HEK293 (cell line): ENCODE measurements at regions of chr12 and their contacts with region 1.

Region 1: DNA sequence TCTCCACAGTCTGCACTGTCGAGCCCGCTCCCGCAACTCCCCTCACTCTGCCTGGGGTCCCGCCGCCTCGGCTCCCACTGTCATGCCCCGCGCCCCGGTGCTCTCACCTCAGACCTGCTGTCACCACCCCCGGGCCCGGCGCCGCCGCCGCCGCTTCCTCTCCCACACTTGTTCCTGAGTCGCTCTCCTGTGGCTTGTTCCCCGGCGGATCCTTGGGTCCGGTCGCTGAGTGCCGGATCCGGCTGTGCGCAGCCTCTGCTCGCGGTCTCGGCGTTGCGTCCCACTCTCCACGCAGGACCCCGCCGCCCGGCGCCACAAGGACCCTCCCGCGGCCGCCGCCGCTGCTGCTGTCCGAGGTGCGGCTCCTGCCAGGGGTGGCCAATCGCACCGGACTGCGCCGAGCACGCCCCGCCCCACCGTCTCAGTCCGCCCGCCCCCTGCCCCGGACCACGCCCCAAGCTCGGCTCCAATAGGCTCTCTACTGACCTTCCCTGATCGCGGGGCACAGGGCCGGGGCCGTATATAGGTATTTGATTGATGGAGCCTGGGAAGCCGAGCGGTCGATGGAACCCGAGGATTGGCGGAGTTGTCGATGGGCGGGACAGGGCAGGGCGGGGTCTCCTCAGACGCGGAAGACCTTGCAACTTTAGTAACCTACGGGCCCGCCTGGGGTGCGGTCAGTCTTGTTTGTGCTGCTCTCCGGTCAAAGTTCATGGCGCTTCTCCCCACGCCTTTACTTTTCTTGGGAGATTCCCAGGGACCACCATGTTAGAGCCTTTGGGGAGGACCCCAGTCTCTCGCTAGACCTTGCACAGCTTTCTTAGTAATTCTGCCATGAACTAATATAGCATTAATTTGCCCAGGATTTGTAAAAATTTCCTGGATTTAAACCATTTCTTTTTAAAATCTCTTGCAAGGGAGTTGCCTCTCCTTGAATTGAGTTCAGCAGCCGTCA is at the start of gene TAOK3:
- H3K4me3 ChIP-seq: peak within 1 kb of the TSS; percentile 87
- H3K27ac ChIP-seq: no peak within 1 kb of the TSS; the same call in 1 of the 2 replicates
- H3K4me1 ChIP-seq: no peaks in the 10 kb centered on the region
- CTCF ChIP-seq: peak; percentile 39; the same call in 1 of the 2 replicates

Region 2: GRCh38 chr12:117874842-117875434 is 497.9 kb before region 1 on chr12:
- CTCF ChIA-PET with region 1: interaction called, 11 read pairs
- POLR2A ChIA-PET with region 1: no interaction called
- H3K4me3 ChIP-seq: no peak overlapping the region
- H3K27ac ChIP-seq: no peak overlapping the region
- H3K4me1 ChIP-seq: no peaks in the 10 kb centered on the region; the same call in 1 of the 2 replicates
- CTCF ChIP-seq: peak; percentile 73

Region 3: DNA sequence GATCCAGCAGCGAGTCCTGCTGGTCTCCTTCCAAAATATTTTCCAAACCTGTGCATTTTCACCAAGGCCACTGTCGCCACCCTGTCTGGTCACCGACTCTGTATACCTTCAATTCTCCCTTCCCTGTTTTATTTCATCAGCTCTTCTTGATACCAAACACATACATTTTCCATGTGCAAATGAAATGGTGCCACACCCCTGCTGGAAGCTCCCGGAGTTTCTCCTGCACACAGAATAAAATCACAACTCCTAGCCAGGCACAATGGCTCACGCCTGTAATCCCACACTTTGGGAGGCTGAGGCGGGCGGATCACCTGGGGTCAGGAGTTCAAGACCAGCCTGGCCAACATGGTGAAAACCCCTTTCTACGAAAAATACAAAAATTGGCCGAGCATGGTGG is 283.0 kb before region 1 on chr12:
- CTCF ChIA-PET with region 1: no interaction called
- POLR2A ChIA-PET with region 1: no interaction called
- H3K4me3 ChIP-seq: no peak overlapping the region
- H3K27ac ChIP-seq: no peak overlapping the region
- H3K4me1 ChIP-seq: no peaks in the 10 kb centered on the region
- CTCF ChIP-seq: no peak

Region 4: DNA sequence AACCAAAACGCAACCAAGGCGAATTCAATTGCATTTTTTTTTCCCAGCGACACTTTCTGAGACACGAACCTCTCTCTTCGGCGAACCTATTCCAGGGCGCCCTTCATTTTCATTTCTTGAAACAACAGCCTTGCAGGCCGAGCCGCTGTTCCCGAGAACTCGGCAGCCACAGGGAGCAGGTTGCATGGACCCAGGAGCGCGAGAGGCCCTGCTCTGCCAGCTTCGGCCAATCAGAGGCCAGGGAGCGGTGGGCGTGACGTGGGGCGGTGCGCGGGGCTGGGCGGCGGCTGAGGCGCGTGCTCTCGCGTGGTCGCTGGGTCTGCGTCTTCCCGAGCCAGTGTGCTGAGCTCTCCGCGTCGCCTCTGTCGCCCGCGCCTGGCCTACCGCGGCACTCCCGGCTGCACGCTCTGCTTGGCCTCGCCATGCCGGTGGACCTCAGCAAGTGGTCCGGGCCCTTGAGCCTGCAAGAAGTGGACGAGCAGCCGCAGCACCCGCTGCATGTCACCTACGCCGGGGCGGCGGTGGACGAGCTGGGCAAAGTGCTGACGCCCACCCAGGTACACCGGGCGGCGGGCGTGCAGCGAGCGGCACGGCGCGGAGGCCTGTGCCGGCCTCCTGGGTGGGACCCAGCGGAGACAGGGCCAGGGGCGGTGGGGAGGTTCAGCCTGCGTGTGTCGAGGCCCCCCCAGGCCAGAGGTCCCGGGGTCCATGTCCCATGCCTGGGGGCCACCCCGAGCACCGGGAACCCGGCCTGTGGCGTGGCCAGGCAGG is 236.8 kb before region 1 on chr12 and contains the start of gene PEBP1:
- CTCF ChIA-PET with region 1: interaction called, 4 read pairs
- POLR2A ChIA-PET with region 1: interaction called, 12 read pairs
- H3K4me3 ChIP-seq: peak within 1 kb of the TSS; percentile 79
- H3K27ac ChIP-seq: peak within 1 kb of the TSS; percentile 58; the same call in 1 of the 2 replicates
- H3K4me1 ChIP-seq: peaks cover 10% of the 10 kb centered on the region; the same call in 1 of the 2 replicates
- CTCF ChIP-seq: peak; percentile 72

Region 5: DNA sequence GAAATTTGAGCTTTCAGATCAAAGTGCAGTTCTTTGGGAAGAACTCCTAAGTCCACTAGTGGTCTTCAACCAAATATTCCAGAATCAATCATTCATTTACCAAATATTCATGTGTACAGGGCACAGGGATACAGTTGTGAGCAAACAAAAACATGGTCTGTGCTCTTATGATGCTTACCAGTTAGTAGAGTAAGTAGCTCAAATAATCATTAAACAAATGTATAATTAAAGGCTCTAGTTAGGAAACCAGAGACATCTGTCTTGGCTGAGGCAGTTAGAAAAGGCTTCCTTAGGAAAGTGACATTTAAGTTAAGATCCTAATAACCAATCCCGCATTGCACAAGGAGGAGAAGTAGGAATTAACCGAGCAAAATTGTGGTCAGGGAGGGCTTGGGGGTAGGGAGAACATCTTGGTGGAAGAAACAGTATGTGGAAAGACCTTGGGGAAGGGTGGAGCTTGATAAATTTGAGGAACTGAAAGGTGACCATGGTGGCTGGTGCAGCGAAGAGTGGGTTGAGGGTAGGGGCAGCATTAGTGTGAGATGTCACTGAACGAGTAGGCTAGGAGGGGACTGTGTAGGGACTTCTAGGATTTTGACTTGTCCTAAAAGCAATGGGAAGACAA is 196.9 kb before region 1 on chr12:
- CTCF ChIA-PET with region 1: interaction called, 125 read pairs
- POLR2A ChIA-PET with region 1: no interaction called
- H3K4me3 ChIP-seq: no peak overlapping the region
- H3K27ac ChIP-seq: no peak overlapping the region
- H3K4me1 ChIP-seq: no peaks in the 10 kb centered on the region
- CTCF ChIP-seq: no peak

Region 6: GRCh38 chr12:118357257-118358007 is 15.4 kb before region 1 on chr12:
- CTCF ChIA-PET with region 1: interaction called, 40 read pairs
- POLR2A ChIA-PET with region 1: interaction called, 8 read pairs
- H3K4me3 ChIP-seq: no peak overlapping the region
- H3K27ac ChIP-seq: no peak overlapping the region
- H3K4me1 ChIP-seq: peaks cover 6% of the 10 kb centered on the region; the same call in 1 of the 2 replicates
- CTCF ChIP-seq: no peak